Right cardiac atrium (tissue), 5 donors: ENCODE measurements at regions of chr17 and their contacts with region 1.

Region 1: DNA sequence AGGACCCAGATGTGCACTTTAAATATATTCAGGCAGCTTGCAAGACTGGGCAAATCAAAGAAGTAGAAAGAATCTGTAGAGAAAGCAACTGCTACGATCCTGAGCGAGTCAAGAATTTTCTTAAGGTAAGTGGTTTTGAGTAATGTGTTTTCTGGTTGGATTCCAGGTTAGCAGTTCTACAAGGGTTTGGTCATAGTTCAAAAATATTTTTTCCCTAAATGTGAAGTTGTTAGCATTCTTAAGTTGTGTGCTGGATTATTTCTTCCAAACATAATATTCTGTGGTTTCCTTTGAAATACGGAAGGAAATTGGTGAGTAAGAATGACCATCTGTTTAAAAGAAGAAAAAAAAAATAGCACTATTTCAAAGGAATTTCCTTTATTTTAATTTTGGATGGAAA is 38.4 kb downstream of the PTRH2 start:
- DNase-seq: no peak
- ATAC-seq: peak in 1 of 2 donors; percentile 44
- H3K4me3 ChIP-seq: no peak overlapping the region
- H3K27ac ChIP-seq: no peak overlapping the region
- H3K4me1 ChIP-seq: no peaks in the 10 kb centered on the region
- H3K27me3 ChIP-seq: no peaks in the 10 kb centered on the region

Region 2: DNA sequence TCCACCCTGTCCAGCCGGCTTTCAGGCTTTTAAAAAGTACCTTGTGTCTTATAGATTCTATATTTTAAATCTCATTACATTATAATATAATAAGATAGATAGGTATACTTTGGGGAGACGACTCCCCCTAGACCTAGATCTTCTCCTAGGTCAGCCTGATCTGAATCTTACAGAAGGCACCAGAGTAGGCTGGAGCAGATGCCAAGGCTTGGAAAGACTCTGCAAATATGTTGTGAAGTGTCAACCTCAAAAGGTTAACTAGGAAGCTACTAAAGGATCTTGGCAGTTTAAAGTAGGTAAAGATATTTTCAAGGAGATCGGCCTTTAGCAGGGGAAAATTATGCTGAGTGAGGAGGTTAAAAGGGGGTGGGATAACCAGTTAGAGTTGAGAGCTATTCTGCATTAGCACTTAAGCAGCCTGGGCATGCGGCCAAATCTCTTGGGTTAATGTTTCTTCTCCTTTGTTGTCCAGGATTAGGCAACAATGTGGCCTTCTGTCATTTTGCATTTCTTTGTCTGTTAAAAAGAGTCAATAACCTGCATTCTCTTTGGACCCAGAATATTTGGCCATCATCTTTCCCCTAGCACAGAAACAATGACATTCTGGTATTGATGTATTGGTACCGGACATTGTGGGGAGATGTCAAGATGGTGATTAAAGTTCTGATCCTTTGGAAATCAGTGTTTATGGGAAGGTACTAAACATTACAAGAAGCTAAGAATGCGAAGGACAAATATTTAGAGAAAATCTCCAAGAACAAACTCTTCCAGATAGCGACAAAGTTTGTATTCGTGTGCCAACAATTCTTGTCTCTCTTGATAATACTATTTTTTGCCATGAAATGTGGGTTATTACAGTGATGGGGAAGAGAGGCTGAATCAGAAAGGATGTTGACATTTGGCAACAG is 154.6 kb before region 1 on chr17:
- intact Hi-C with region 1: no loop called
- DNase-seq: peak; percentile 77 to 95 (median 90)
- ATAC-seq: peak; percentile 63 to 64
- H3K4me3 ChIP-seq: no peak overlapping the region
- H3K27ac ChIP-seq: no peak overlapping the region
- H3K4me1 ChIP-seq: no peaks in the 10 kb centered on the region
- H3K27me3 ChIP-seq: no peaks in the 10 kb centered on the region

Region 3: GRCh38 chr17:59607817-59608403 is 60.9 kb before region 1 on chr17:
- intact Hi-C with region 1: no loop called
- DNase-seq: no peak
- ATAC-seq: no peak
- H3K4me3 ChIP-seq: no peak overlapping the region
- H3K27ac ChIP-seq: no peak overlapping the region
- H3K4me1 ChIP-seq: no peaks in the 10 kb centered on the region
- H3K27me3 ChIP-seq: no peaks in the 10 kb centered on the region

Region 4: DNA sequence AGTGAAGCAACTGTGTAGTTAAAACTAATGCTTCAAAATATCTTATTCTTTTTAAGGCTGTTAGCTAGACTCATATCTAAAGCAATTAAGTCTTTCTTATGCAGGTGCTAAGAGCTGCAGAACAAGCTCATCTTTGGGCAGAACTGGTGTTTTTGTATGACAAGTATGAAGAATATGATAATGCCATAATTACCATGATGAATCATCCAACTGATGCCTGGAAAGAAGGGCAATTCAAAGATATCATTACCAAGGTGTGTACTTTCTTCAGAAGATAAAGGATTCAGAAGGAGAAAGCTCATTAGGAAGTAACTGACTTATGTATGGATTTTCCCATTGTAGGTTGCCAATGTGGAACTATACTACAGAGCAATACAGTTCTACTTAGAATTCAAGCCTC is 14.5 kb after region 1 on chr17:
- intact Hi-C with region 1: loop called in 1 of 4 experiments (anchors 2 kb)
- DNase-seq: no peak
- ATAC-seq: no peak
- H3K4me3 ChIP-seq: no peak overlapping the region
- H3K27ac ChIP-seq: no peak overlapping the region
- H3K4me1 ChIP-seq: no peaks in the 10 kb centered on the region
- H3K27me3 ChIP-seq: no peaks in the 10 kb centered on the region

Region 5: GRCh38 chr17:59712862-59713261 is 44.0 kb after region 1 on chr17:
- intact Hi-C with region 1: no loop called
- DNase-seq: no peak
- ATAC-seq: no peak
- H3K4me3 ChIP-seq: no peak overlapping the region
- H3K27ac ChIP-seq: no peak overlapping the region
- H3K4me1 ChIP-seq: no peaks in the 10 kb centered on the region
- H3K27me3 ChIP-seq: no peaks in the 10 kb centered on the region